Posterior vena cava (tissue), 2 donors: ENCODE measurements at regions of chr19 and their contacts with region 1.

Region 1: GRCh38 chr19:10593820-10594637 is 6.9 kb upstream of the AP1M2 start:
- DNase-seq: no peak

Region 2: DNA sequence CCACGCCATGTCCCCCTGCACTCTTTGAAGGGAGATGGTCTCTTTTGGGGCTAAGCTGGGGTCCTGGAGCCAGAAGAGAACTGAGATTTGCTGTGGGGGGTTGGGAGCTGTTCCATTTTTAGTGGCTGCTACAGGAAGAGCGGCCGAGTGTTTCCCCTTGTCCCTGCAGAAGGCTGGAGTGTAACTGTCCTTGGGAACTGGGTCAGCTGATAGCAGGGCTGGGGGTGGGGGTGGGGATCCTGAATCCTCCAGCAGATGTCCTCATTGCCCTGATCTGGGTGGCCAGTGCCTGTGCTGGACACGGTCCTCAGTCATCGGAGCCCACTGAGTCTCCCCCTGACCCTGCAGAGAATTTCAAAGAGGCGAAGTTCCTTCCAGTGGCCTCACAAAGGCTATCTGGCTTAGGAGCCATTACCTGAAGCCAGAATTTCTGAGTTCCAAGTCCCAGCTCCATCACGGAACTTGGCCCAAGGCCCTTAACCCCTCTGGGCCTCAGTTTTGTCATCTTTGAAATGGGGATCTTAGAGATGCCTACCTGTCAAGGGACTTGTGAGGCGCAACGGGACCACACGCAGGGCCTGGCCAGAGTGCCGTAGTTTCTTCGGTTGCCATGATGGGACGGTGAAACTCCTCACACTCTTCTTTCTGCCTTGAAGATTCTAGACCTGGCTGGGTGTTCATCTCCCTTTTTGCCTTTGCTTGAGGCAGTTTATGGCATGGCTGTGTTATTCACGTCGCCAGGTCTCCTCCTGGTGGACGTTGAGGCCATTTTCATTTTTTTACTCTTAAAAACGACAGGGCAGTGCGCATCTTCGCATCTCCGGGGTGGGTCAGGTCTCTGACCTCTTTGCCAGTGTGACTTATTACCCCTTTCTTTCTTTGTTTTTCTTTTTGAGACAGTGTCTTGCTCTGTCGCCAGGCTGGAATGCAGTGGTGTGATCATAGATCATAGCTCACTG is 175.8 kb after region 1 on chr19:
- intact Hi-C with region 1: loop called in 1 of 2 experiments (anchors 10 kb)
- DNase-seq: no peak